ENCODE measurements at regions of chr16 and their contacts with region 1.

Region 1: GRCh38 chr16:30844671-30845449 is 49.0 kb downstream of the BCL7C start:
- DNase-seq: peak; percentile 77
- H3K4me3 Mint-ChIP-seq: no peak overlapping the region
- H3K27ac Mint-ChIP-seq: peak overlapping the region; percentile 13
- H3K4me1 Mint-ChIP-seq: peaks cover 12% of the 10 kb centered on the region
- H3K27me3 Mint-ChIP-seq: peaks cover 1% of the 10 kb centered on the region

Region 2: GRCh38 chr16:30874821-30875717 is 30.2 kb after region 1 on chr16:
- intact Hi-C with region 1: loop called (anchors 1 kb)
- DNase-seq: peak; percentile 86
- H3K4me3 Mint-ChIP-seq: peak overlapping the region; percentile 97
- H3K27ac Mint-ChIP-seq: peak overlapping the region; percentile 94
- H3K4me1 Mint-ChIP-seq: peaks cover 23% of the 10 kb centered on the region
- H3K27me3 Mint-ChIP-seq: no peaks in the 10 kb centered on the region

Region 3: DNA sequence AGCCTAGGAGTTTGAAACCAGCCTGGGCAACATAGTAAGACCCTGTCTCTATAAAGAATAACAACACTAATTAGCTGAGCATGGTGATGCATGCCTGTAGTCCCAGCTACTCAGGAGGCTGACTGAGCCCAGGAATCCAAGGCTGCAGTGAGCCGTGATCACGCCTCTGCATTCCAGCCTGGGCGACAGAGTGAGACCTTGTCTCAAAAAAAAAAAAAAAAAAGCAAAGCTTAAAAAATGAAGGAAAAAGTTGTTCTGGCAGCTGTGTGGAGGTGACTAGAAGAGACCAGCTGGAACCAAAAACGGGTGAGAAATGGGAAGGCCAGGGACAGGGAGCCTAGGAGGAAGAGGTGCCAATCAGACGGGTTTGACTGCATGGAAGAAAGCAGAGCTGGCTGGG is 44.9 kb after region 1 on chr16:
- intact Hi-C with region 1: no loop called
- DNase-seq: no peak
- H3K4me3 Mint-ChIP-seq: no peak overlapping the region
- H3K27ac Mint-ChIP-seq: no peak overlapping the region
- H3K4me1 Mint-ChIP-seq: peaks cover 27% of the 10 kb centered on the region
- H3K27me3 Mint-ChIP-seq: no peaks in the 10 kb centered on the region

Region 4: GRCh38 chr16:30902029-30902972 is 57.4 kb after region 1 on chr16:
- intact Hi-C with region 1: loop called (anchors 1 kb)
- DNase-seq: peak; percentile 54
- H3K4me3 Mint-ChIP-seq: peak overlapping the region; percentile 94
- H3K27ac Mint-ChIP-seq: peak overlapping the region; percentile 96
- H3K4me1 Mint-ChIP-seq: peaks cover 31% of the 10 kb centered on the region
- H3K27me3 Mint-ChIP-seq: no peaks in the 10 kb centered on the region

Region 5: DNA sequence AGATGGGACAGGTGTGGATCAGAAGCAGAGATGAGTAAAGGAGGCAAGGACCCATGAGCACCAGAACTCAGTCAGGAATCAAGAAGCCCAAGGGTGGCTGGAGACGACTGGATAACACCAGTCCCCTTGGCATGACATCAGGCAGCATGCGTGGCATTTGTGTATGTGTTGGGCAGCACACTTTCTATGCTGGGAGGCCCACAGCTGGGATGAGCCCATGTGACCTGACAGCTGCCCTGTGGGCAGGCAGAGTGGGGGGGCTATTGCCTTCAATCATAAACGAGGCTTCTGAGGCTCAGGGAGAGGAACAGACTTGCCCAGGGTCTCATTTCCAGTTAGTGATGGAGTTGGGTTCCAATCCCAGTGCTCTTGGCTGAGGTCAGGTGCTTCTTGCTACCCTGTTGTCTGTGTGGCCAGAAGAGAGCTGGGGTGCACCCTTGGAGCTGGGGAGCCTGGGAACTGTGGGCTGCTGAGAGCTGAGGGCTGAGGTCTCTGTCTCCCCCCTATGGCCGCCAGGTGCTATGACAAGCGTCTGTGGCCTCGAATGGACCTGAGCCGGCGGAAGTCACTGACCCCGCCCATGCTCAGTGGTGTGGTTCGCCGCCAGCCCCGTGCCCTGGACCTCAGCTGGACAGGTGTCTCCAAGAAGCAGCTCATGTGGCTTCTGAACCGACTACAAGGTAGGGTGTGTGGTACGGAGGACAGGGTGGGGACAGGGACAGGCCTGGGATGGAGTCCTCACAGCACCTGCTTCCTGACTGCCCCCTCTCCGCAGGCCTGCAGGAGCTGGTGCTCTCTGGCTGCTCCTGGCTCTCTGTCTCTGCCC is 97.0 kb after region 1 on chr16:
- intact Hi-C with region 1: loop called (anchors 1 kb)
- DNase-seq: peak; percentile 64
- H3K4me3 Mint-ChIP-seq: peak overlapping the region; percentile 56
- H3K27ac Mint-ChIP-seq: no peak overlapping the region
- H3K4me1 Mint-ChIP-seq: peaks cover 28% of the 10 kb centered on the region
- H3K27me3 Mint-ChIP-seq: no peaks in the 10 kb centered on the region

Region 6: DNA sequence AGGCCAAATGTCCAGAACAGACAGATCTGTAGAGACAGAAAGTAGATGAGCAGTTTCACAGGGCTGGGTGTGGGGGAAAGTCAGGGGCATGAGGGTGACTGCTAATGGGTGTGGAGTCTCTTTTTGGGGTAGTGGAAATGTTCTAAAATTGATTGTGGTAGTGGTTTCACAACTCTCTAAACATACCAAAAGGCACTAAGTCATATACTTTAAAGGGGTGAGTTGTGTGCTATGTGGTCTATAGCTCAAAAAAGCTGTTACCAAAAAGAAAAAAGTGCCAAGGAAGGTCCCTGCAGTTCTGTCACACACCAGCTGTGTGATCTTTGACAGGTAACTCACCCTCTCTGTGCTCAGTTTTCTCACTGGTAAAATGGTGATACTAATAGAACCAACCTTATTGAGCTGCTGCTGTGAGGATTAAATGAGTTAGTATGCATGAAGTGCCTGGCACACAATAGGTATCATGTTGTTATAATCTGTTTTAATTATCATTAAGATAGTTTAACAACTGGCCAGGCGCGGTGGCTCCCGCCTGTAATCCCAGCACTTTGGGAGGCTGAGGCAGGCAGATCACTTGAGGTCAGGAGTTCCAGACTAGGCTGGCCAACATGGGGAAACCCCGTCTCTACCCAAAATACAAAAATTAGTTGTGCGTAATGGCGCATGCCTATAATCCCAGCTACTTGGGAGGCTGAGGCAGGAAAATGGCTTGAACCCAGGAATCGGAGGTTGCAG is 520.4 kb after region 1 on chr16:
- intact Hi-C with region 1: no loop called
- DNase-seq: no peak
- H3K4me3 Mint-ChIP-seq: no peak overlapping the region
- H3K27ac Mint-ChIP-seq: peak overlapping the region; percentile 70
- H3K4me1 Mint-ChIP-seq: peaks cover 47% of the 10 kb centered on the region
- H3K27me3 Mint-ChIP-seq: no peaks in the 10 kb centered on the region